ENCODE measurements at regions of chr5 and their contacts with region 1.

Region 1: DNA sequence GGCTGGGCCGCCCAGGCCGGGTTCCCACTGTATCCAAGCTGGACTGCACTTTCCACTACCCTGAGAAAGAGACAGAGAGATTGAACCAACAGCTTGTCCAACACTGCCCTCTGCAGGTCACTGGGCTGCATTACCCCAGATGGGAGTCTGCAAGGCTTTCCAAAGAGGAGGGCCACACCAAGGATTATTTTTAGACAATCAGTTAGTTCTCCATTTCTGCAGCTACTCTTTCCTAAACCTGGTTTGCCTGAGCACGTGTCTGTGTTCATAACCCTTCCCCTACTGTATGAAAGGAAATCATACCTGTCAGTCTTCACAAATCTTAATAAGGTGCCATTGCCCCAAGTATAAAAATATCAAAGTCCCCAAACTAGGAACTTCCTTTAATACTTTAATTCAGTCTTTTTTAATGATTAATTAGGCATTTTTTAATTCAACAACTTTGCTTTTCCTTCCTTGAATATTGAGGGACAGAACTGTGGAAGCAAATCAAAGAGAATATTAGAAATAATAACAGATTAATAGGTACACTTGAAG is 13.4 kb upstream of the FGF1 start:
- DNase-seq: peak; percentile 73 to 82 (median 78)
- ATAC-seq: peak; percentile 99
- H3K4me3 ChIP-seq: no peak overlapping the region
- H3K27ac ChIP-seq: no peak overlapping the region
- H3K4me1 ChIP-seq: no peaks in the 10 kb centered on the region
- H3K27me3 ChIP-seq: peaks cover 0 to 9% of the 10 kb centered on the region in 2 experiments; a peak in 2 of 5 replicates
- CTCF ChIP-seq: peak; percentile 87 to 97 (median 95)
- EP300 ChIP-seq: no peak
- POLR2A ChIP-seq: no peak
- RAD21 ChIP-seq: peak; percentile 95 to 97

Region 2: DNA sequence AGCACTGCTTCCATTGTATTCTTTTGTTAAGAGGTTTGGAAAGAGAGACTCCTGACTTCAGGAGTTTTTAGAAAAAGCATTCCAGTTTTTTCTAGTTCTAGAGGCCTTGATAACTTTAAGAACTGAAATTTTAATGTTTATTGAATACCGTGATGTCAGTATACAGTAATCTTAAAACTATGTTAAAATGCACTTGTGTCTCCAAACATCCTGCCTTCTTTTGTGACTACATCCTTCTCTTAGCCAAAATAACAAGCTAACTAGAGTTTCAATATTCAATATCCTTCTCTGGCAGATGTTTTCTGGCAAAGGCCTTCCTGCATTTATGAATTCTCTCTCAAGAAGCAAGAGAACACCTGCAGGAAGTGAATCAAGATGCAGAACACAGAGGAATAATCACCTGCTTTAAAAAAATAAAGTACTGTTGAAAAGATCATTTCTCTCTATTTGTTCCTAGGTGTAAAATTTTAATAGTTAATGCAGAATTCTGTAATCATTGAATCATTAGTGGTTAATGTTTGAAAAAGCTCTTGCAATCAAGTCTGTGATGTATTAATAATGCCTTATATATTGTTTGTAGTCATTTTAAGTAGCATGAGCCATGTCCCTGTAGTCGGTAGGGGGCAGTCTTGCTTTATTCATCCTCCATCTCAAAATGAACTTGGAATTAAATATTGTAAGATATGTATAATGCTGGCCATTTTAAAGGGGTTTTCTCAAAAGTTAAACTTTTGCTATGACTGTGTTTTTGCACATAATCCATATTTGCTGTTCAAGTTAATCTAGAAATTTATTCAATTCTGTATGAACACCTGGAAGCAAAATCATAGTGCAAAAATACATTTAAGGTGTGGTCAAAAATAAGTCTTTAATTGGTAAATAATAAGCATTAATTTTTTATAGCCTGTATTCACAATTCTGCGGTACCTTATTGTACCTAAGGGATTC is 547.5 kb before region 1 on chr5:
- CTCF ChIA-PET with region 1: interaction called, 15 read pairs
- POLR2A ChIA-PET with region 1: no interaction called
- in situ Hi-C with region 1: no loop called
- intact Hi-C with region 1: loop called (anchors 2 kb)
- DNase-seq: peak; percentile 50 to 76 (median 60)
- ATAC-seq: peak; percentile 85
- H3K4me3 ChIP-seq: no peak overlapping the region
- H3K27ac ChIP-seq: no peak overlapping the region
- H3K4me1 ChIP-seq: no peaks in the 10 kb centered on the region
- H3K27me3 ChIP-seq: no peaks in the 10 kb centered on the region
- CTCF ChIP-seq: peak; percentile 63 to 93 (median 66); a peak in 5 of 6 replicates
- EP300 ChIP-seq: no peak
- POLR2A ChIP-seq: no peak
- RAD21 ChIP-seq: peak; percentile 92 to 93

Region 3: GRCh38 chr5:142167458-142167857 is 531.8 kb before region 1 on chr5:
- CTCF ChIA-PET with region 1: no interaction called
- POLR2A ChIA-PET with region 1: no interaction called
- in situ Hi-C with region 1: loop called (anchors 10 kb)
- intact Hi-C with region 1: no loop called
- DNase-seq: no peak
- ATAC-seq: no peak
- H3K4me3 ChIP-seq: no peak overlapping the region
- H3K27ac ChIP-seq: no peak overlapping the region
- H3K4me1 ChIP-seq: peaks cover 0 to 4% of the 10 kb centered on the region in 2 experiments; a peak in 2 of 5 replicates
- H3K27me3 ChIP-seq: peaks cover 14 to 31% of the 10 kb centered on the region in 2 experiments
- CTCF ChIP-seq: no peak
- EP300 ChIP-seq: no peak
- POLR2A ChIP-seq: no peak
- RAD21 ChIP-seq: no peak

Region 4: GRCh38 chr5:142587354-142587965 is 111.8 kb before region 1 on chr5:
- CTCF ChIA-PET with region 1: interaction called, 4 read pairs
- POLR2A ChIA-PET with region 1: interaction called, 4 read pairs
- in situ Hi-C with region 1: loop called (anchors 10 kb)
- intact Hi-C with region 1: loop called (anchors 1 kb)
- DNase-seq: peak; percentile 22 to 68 (median 30)
- ATAC-seq: peak; percentile 70
- H3K4me3 ChIP-seq: no peak overlapping the region
- H3K27ac ChIP-seq: no peak overlapping the region
- H3K4me1 ChIP-seq: no peaks in the 10 kb centered on the region
- H3K27me3 ChIP-seq: peaks cover 0 to 10% of the 10 kb centered on the region in 2 experiments; a peak in 1 of 5 replicates
- CTCF ChIP-seq: peak; percentile 63 to 72 (median 67)
- EP300 ChIP-seq: no peak
- POLR2A ChIP-seq: no peak
- RAD21 ChIP-seq: peak; percentile 51 to 62; a peak in 3 of 4 replicates

Region 5: DNA sequence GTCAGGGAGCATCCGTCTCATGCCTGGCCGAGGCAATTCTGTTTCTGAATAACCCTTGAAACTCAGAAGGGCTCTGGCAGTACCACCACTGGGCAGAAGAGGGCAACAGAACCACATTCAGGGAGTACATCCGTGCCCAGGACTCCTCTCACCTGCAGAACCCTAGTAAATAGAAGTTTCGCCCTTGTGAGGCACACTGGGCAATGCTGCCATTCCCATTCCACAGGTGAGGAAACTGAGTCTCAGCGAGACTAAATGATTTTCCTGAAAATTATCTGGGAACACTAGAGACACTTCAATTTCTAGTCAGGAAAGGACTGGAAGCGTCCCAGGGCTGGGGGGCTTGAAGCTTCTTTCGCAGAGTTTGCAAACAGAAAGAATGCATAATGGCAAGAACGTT is 88.1 kb before region 1 on chr5:
- CTCF ChIA-PET with region 1: interaction called, 4 read pairs
- POLR2A ChIA-PET with region 1: interaction called, 3 read pairs
- in situ Hi-C with region 1: no loop called
- intact Hi-C with region 1: loop called (anchors 1 kb)
- DNase-seq: peak; percentile 56 to 60 (median 56)
- ATAC-seq: peak; percentile 95
- H3K4me3 ChIP-seq: no peak overlapping the region
- H3K27ac ChIP-seq: no peak overlapping the region
- H3K4me1 ChIP-seq: no peaks in the 10 kb centered on the region
- H3K27me3 ChIP-seq: peaks cover 17 to 50% of the 10 kb centered on the region in 2 experiments; a peak in 4 of 5 replicates
- CTCF ChIP-seq: peak; percentile 73 to 80 (median 73)
- EP300 ChIP-seq: no peak
- POLR2A ChIP-seq: no peak
- RAD21 ChIP-seq: peak; percentile 76 to 77

Region 6: GRCh38 chr5:142655339-142656267 is 43.6 kb before region 1 on chr5:
- CTCF ChIA-PET with region 1: interaction called, 24 read pairs
- POLR2A ChIA-PET with region 1: no interaction called
- in situ Hi-C with region 1: no loop called
- intact Hi-C with region 1: loop called (anchors 1 kb)
- DNase-seq: peak; percentile 74 to 85 (median 82)
- ATAC-seq: peak; percentile 99
- H3K4me3 ChIP-seq: no peak overlapping the region
- H3K27ac ChIP-seq: no peak overlapping the region
- H3K4me1 ChIP-seq: no peaks in the 10 kb centered on the region
- H3K27me3 ChIP-seq: peaks cover 14 to 48% of the 10 kb centered on the region in 2 experiments; a peak in 4 of 5 replicates
- CTCF ChIP-seq: peak; percentile 93 to 95 (median 94)
- EP300 ChIP-seq: no peak
- POLR2A ChIP-seq: no peak
- RAD21 ChIP-seq: peak; percentile 90 to 91